Activated B cell treated with CpG ODN at 0.5 μM for 24 hours (primary cell): ENCODE measurements at regions of chr7 and their contacts with region 1.

Region 1: DNA sequence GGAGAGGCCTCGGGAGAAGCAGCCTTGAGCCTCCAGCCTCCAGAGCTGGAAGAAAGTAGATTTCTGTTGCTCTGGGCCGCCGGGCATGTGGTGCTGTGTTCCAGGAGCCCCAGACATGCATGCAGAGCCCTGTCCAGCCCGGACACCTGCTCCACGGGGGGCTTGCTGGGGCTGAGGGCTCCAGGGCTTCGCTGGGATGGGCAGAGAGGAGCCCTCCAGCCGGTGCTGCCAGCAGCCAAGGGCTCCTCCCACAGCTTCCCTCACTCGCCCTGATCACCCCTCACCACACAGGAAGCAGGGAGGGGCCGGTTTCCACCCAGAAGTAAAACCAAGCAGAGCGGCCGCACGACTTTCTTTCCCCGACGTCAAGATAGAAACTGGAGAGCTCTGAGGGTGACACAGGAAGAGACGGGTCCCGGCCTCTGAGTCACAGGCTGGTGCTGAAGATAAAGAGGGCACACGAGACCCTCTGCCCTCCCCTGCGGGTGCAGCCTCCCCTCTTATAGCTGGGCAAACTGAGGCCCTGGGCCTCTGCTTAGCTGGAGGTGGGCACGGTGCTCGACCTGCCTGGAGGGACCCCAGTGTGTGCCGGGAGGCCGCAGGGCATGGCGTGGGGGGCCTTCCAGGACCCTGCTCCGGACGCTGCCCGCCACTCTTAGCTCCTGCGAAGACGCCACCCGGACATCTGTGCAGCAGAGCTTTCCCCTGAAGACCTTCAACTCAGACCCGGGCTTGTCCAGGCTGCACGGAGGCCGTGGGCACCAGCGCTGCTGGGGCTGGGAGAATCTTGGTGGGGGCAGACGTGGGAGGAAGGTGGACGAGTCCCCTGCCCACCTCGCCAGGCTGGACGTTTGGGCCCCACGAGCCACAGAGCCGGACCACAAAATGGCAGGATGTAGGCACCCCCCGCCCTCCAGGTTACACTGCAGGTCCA is 31.1 kb downstream of the ADAP1 start:
- DNase-seq: peak; percentile 72
- ATAC-seq: peak; percentile 85
- H3K4me3 Mint-ChIP-seq: peak overlapping the region; percentile 77
- H3K27ac Mint-ChIP-seq: peak overlapping the region; percentile 84
- H3K4me1 Mint-ChIP-seq: peaks cover 42% of the 10 kb centered on the region
- H3K27me3 Mint-ChIP-seq: no peaks in the 10 kb centered on the region
- CTCF ChIP-seq: no peak

Region 2: DNA sequence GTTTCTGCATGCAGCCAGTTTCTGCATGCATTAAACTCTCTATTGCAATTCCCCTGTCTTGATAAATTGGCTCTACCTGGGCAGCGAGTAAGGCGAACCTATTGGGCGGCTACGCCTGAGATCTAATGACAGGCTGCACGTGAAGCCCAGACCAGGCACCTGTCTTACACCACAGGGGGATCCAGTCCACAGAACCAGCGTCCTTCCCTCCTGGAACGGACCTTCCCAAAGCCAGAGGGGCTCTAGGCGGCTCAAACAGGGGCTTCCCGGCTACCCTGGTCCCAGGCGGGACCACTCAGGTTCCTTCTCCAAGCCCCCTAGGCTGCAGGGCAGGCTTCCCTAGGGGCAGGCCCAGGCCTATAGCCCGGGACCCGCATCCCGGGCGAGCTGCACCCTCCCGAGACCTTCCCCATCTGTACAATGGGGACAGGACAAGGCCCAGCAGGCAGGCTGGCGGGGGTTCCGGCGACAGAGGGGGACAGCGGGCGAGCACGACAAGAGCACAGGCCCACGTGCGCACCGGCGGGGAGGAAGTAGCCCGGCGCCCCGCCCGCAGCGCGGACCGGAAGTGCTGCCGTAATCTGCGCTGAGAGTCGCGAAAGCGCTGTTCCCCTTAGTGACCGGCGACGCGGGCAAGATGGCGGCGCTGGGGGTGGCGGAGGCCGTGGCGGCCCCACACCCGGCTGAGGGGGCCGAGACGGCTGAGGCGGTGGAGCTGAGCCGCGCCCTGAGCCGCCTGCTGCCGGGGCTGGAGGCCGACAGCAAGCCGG is 197.1 kb before region 1 on chr7 and contains the start of gene DNAAF5:
- CTCF ChIA-PET with region 1: no interaction called
- POLR2A ChIA-PET with region 1: no interaction called
- intact Hi-C with region 1: loop called (anchors 2 kb)
- DNase-seq: peak; percentile 87
- ATAC-seq: peak; percentile 89
- H3K4me3 Mint-ChIP-seq: peak within 1 kb of the TSS; percentile 83
- H3K27ac Mint-ChIP-seq: peak within 1 kb of the TSS; percentile 65
- H3K4me1 Mint-ChIP-seq: peaks cover 22% of the 10 kb centered on the region
- H3K27me3 Mint-ChIP-seq: no peaks in the 10 kb centered on the region
- CTCF ChIP-seq: no peak
- total RNA-seq, gene DNAAF5: 23.5 and 25.9 TPM in 2 replicates

Region 3: GRCh38 chr7:836411-837400 is 86.7 kb before region 1 on chr7:
- CTCF ChIA-PET with region 1: no interaction called
- POLR2A ChIA-PET with region 1: no interaction called
- intact Hi-C with region 1: no loop called
- DNase-seq: no peak
- ATAC-seq: no peak
- H3K4me3 Mint-ChIP-seq: no peak overlapping the region
- H3K27ac Mint-ChIP-seq: no peak overlapping the region
- H3K4me1 Mint-ChIP-seq: peaks cover 26% of the 10 kb centered on the region
- H3K27me3 Mint-ChIP-seq: no peaks in the 10 kb centered on the region
- CTCF ChIP-seq: no peak

Region 4: GRCh38 chr7:936131-937054 is 13.0 kb after region 1 on chr7:
- CTCF ChIA-PET with region 1: no interaction called
- POLR2A ChIA-PET with region 1: interaction called, 10 read pairs
- intact Hi-C with region 1: loop called (anchors 1 kb)
- DNase-seq: peak; percentile 47
- ATAC-seq: peak; percentile 78
- H3K4me3 Mint-ChIP-seq: peak overlapping the region; percentile 42
- H3K27ac Mint-ChIP-seq: peak overlapping the region; percentile 19
- H3K4me1 Mint-ChIP-seq: peaks cover 19% of the 10 kb centered on the region
- H3K27me3 Mint-ChIP-seq: no peaks in the 10 kb centered on the region
- CTCF ChIP-seq: no peak

Region 5: GRCh38 chr7:1028031-1028770 is 104.8 kb after region 1 on chr7:
- CTCF ChIA-PET with region 1: no interaction called
- POLR2A ChIA-PET with region 1: no interaction called
- intact Hi-C with region 1: loop called (anchors 1 kb)
- DNase-seq: peak; percentile 85
- ATAC-seq: peak; percentile 38
- H3K4me3 Mint-ChIP-seq: peak overlapping the region; percentile 91
- H3K27ac Mint-ChIP-seq: no peak overlapping the region
- H3K4me1 Mint-ChIP-seq: peaks cover 61% of the 10 kb centered on the region
- H3K27me3 Mint-ChIP-seq: no peaks in the 10 kb centered on the region
- CTCF ChIP-seq: no peak

Region 6: DNA sequence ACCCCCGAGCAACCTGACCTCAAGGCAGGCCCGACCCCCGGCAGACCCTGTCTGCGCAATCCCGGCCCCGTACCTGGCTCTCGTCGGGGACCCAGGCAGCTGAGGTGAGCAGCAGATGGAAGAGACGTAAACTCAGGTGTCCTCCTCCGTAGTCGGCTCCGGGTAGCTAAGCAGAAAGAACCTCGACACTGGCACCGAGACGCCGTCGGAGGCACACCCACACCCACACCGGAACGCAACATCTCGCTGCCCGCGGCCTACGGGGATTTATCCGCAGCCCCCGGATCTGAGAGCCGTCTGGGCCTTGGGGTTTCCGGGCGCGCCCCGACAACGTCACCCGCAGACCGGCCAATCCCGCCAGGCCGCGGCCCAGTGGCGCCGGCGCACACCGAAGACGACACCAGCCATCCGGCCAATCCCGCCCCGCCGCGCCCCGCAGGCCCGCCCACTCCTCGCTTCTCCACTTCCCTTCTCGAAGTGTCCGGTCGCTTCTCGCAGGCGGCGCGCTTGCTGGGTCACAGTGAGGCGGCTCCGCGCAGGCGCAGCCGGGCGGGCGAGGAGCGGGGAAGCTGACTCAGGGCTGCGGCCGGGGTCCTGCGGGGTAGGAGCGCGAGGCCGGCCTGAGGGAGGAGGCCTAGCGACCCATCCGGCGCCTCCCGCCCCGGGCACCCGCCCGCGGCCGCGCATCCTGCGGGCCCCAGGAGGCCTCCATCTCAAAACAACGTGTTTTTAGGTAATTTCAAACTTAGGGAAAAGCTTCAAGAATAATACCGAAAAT is 236.7 kb after region 1 on chr7 and contains the start of gene ZFAND2A:
- CTCF ChIA-PET with region 1: no interaction called
- POLR2A ChIA-PET with region 1: interaction called, 3 read pairs
- intact Hi-C with region 1: loop called (anchors 5 kb)
- DNase-seq: peak; percentile 99
- ATAC-seq: peak; percentile 97
- H3K4me3 Mint-ChIP-seq: peak within 1 kb of the TSS; percentile 88
- H3K27ac Mint-ChIP-seq: peak within 1 kb of the TSS; percentile 79
- H3K4me1 Mint-ChIP-seq: peaks cover 25% of the 10 kb centered on the region
- H3K27me3 Mint-ChIP-seq: no peaks in the 10 kb centered on the region
- CTCF ChIP-seq: no peak
- total RNA-seq, gene ZFAND2A: 20.4 and 21.6 TPM in 2 replicates